Mammary epithelial cell (primary cell): ENCODE measurements at regions of chr7 and their contacts with region 1.

Region 1: DNA sequence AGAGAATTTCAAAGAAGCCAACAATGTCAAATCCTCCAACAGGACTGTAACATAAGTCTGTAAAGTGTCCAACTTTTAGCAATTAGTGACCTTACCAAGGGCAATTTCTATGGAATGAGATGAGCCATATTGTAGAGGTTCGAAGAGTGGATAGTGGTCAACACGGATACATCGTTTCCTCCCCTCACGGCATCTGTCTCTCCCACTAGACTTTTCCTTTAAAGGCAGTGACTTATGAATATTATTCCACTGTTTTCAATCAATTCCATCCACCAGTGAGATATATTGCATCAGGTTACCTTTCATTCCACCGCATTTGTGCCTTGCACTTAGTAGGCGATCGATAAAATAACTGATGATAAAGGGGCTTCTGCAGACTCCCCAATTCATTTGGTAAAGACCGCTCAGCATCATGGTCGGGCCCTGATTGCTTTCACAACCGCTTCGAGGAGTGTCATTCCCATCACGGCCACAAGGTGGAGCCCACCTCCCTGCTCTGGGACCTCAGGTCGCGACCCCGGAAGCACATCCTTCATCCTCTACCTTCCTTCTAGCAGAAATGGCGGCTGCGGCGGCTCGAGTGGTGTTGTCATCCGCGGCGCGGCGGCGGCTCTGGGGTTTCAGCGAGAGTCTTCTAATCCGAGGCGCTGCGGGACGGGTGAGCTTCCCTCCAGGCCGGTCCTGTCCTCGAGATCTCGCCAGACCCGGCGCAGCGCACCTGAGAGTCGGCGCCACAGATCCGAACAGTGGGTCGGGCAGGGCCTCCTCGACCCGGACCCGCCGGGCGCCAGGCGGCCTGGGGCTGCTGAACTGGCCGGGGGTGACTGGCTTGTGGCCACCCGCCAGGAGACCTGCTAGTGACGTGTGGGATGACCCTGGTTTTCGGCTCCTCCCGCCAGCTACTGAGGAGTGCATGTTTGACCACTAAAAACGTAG is at the start of gene PMPCB:
- DNase-seq: peak; percentile 82
- H3K4me3 ChIP-seq: peak within 1 kb of the TSS; percentile 69 to 96 (median 90)
- H3K27ac ChIP-seq: peak within 1 kb of the TSS; percentile 61
- H3K4me1 ChIP-seq: peaks cover 11% of the 10 kb centered on the region
- H3K27me3 ChIP-seq: no peaks in the 10 kb centered on the region
- CTCF ChIP-seq: peak; percentile 82 to 96
- total RNA-seq, gene PMPCB: 48.7 to 49.1 TPM

Region 2: DNA sequence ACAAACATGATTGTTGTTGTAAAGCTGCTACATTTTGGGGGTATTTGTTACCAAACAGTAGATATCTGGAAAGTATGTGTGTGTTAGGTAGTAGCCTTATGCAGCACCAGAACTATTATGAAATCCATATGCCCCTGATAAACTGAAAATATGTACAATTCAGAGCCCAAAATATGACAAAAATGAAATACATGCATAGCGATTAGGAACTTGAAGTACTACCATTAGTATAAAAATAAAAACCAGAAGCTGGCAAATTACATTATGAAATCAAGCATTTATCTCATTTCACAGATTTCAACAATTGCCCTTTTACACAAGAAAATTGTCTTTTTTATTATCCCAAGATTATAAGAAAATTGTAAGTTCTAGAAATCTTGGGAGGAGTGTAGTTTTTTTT is 115.0 kb after region 1 on chr7:
- CTCF ChIA-PET with region 1: no interaction called
- dilution Hi-C with region 1: no loop called
- in situ Hi-C with region 1: no loop called
- intact Hi-C with region 1: loop called (anchors 1 kb)
- DNase-seq: no peak
- H3K4me3 ChIP-seq: no peak overlapping the region
- H3K27ac ChIP-seq: no peak overlapping the region
- H3K4me1 ChIP-seq: no peaks in the 10 kb centered on the region
- H3K27me3 ChIP-seq: peaks cover 2% of the 10 kb centered on the region
- CTCF ChIP-seq: no peak